Activated naive CD4-positive, alpha-beta T cell treated with anti-CD3 and anti-CD28 coated beads, Interleukin-2, amount 10 ng/mL, durations not matched to agents 7 days and 5 days (primary cell): ENCODE measurements at regions of chr7 and their contacts with region 1.

Region 1: GRCh38 chr7:50142425-50143017 is 49.5 kb upstream of the ZPBP start:
- DNase-seq: peak; percentile 55
- H3K4me3 Mint-ChIP-seq: peak overlapping the region; percentile 40
- H3K27ac Mint-ChIP-seq: peak overlapping the region; percentile 47
- H3K4me1 Mint-ChIP-seq: peaks cover 48% of the 10 kb centered on the region
- H3K27me3 Mint-ChIP-seq: peaks cover 12% of the 10 kb centered on the region

Region 2: GRCh38 chr7:50062951-50063350 is 79.6 kb before region 1 on chr7:
- CTCF ChIA-PET with region 1: no interaction called
- DNase-seq: no peak
- H3K4me3 Mint-ChIP-seq: no peak overlapping the region
- H3K27ac Mint-ChIP-seq: no peak overlapping the region
- H3K4me1 Mint-ChIP-seq: peaks cover 6% of the 10 kb centered on the region
- H3K27me3 Mint-ChIP-seq: peaks cover 10% of the 10 kb centered on the region

Region 3: GRCh38 chr7:50153148-50153547 is 10.6 kb after region 1 on chr7:
- CTCF ChIA-PET with region 1: interaction called, 16 read pairs
- DNase-seq: no peak
- H3K4me3 Mint-ChIP-seq: no peak overlapping the region
- H3K27ac Mint-ChIP-seq: no peak overlapping the region
- H3K4me1 Mint-ChIP-seq: peaks cover 51% of the 10 kb centered on the region
- H3K27me3 Mint-ChIP-seq: no peaks in the 10 kb centered on the region

Region 4: GRCh38 chr7:50369143-50370026 is 226.9 kb after region 1 on chr7:
- CTCF ChIA-PET with region 1: interaction called, 56 read pairs
- DNase-seq: peak; percentile 61
- H3K4me3 Mint-ChIP-seq: no peak overlapping the region
- H3K27ac Mint-ChIP-seq: peak overlapping the region; percentile 76
- H3K4me1 Mint-ChIP-seq: peaks cover 97% of the 10 kb centered on the region
- H3K27me3 Mint-ChIP-seq: no peaks in the 10 kb centered on the region